ENCODE measurements at regions of chrX and their contacts with region 1.

Region 1: DNA sequence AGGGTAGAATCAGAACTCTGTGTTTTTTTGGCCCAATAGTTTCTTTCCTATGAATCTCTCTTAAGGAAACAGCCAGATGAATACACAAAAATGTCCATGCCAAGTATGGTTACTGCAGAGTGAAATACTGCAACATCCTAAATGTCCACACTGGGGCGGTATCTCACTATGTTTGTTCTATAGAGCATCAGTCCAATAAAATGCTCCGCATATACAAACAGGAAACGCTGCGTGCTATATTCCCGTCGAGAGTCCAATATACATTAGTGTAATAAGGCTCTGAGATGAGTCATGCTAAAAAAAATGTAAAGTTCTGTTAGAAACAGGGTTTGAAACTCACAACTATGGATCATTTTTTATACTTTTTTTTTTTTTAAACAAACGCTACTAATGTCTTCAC is 72.9 kb upstream of the ENOX2 start:
- DNase-seq: no peak
- ATAC-seq: peak; percentile 66 to 73
- H3K4me3 ChIP-seq: no peak overlapping the region
- H3K27ac ChIP-seq: no peak overlapping the region
- H3K4me1 ChIP-seq: no peaks in the 10 kb centered on the region
- H3K27me3 ChIP-seq: no peaks in the 10 kb centered on the region
- CTCF ChIP-seq: peak; percentile 42 to 58 (median 47)
- POLR2A ChIP-seq: no peak

Region 2: DNA sequence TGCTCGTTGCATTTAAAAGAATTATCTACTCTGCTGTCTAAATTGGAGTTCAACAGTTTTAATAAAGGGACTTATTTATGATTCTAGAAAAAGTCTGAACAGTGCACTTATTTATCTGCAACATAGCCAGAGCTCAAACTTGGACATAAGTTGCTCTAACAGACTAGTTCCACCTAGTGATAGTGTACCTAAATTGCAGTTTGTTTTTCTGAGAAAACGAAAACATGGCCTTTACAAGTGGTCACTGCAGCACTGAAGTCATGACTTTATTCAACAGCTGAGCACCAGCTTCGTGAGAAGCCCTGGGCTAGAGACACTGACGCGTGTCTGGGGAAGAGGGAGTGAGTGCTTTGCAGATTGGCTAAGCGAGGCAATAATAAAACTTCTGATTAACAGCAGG is 390.5 kb after region 1 on chrX:
- in situ Hi-C with region 1: no loop called
- intact Hi-C with region 1: loop called (anchors 5 kb)
- DNase-seq: no peak
- ATAC-seq: no peak
- H3K4me3 ChIP-seq: no peak overlapping the region
- H3K27ac ChIP-seq: no peak overlapping the region
- H3K4me1 ChIP-seq: no peaks in the 10 kb centered on the region
- H3K27me3 ChIP-seq: no peaks in the 10 kb centered on the region
- CTCF ChIP-seq: peak in 1 of 5 experiments; percentile 13
- POLR2A ChIP-seq: no peak

Region 3: GRCh38 chrX:131626681-131627296 is 650.8 kb after region 1 on chrX:
- in situ Hi-C with region 1: loop called (anchors 10 to 25 kb)
- intact Hi-C with region 1: no loop called
- DNase-seq: no peak
- ATAC-seq: no peak
- H3K4me3 ChIP-seq: no peak overlapping the region
- H3K27ac ChIP-seq: no peak overlapping the region
- H3K4me1 ChIP-seq: peaks cover 0 to under 1% of the 10 kb centered on the region in 2 donors
- H3K27me3 ChIP-seq: no peaks in the 10 kb centered on the region
- CTCF ChIP-seq: no peak
- POLR2A ChIP-seq: no peak

Region 4: GRCh38 chrX:131633285-131633917 is 657.5 kb after region 1 on chrX:
- in situ Hi-C with region 1: loop called (anchors 10 to 25 kb)
- intact Hi-C with region 1: loop called (anchors 2 kb)
- DNase-seq: peak; percentile 2 to 15
- ATAC-seq: peak in 1 of 2 donors; percentile 74
- H3K4me3 ChIP-seq: no peak overlapping the region
- H3K27ac ChIP-seq: no peak overlapping the region
- H3K4me1 ChIP-seq: no peaks in the 10 kb centered on the region
- H3K27me3 ChIP-seq: no peaks in the 10 kb centered on the region
- CTCF ChIP-seq: peak; percentile 29 to 81 (median 56)
- POLR2A ChIP-seq: no peak

Region 5: DNA sequence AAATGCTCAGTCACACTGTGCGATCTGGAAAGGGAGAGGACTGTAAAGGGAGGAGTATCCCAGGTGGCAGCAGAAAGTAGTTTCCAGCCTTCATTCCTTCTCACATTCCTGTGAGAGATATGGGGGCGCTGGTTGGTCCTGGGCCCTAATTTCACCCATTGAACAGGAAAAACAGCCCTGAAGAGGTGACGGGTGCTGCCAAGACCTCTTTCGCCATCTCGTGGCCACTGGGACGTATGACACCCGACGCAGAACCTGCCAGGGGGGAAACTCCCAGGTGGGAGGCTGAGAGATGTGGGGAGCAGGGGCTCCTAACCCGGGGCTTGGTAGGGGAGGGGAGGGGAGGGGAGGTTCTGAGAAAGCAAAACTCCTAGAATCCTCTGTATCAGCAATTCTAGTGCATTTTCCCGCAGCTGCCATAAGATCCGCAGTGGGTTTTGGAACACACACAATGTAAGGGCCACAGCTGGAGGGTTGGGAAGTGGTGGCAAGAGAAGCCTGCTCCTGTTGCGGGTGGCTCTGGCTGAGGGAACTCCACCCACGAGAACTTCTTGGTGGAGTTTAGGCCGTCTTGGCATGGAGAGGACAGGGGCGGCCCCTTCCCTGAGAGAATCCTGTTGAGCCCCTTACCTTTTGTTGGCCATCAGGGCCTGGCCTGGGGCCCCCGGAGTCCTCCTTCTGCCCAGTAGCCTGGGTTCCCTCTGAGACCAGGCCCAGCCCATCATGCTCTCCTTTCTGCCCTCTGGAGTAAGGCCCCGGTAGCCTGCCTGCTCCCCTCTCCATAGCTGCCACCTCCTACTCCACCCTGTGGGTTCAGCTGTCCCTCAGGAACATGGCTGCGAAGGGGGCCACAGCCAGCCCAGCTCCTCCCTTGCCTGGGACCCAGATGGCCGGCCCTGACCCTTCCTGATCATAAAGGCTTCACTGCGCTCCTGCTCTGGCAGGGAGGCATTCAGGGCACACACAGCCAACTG is 702.0 kb after region 1 on chrX:
- in situ Hi-C with region 1: no loop called
- intact Hi-C with region 1: loop called (anchors 5 kb)
- DNase-seq: no peak
- ATAC-seq: no peak
- H3K4me3 ChIP-seq: no peak overlapping the region
- H3K27ac ChIP-seq: no peak overlapping the region
- H3K4me1 ChIP-seq: no peaks in the 10 kb centered on the region
- H3K27me3 ChIP-seq: no peaks in the 10 kb centered on the region
- CTCF ChIP-seq: peak in 4 of 5 experiments; percentile 21 to 69 (median 37)
- POLR2A ChIP-seq: no peak